ENCODE measurements at regions of chr3 and their contacts with region 1.

Region 1: GRCh38 chr3:17645072-17645698 is 97.2 kb downstream of the TBC1D5 start:
- DNase-seq: peak in 1 of 2 experiments; percentile 67
- H3K4me3 ChIP-seq: no peak overlapping the region
- H3K4me3 Mint-ChIP-seq: no peak overlapping the region
- H3K27ac Mint-ChIP-seq: no peak overlapping the region
- H3K4me1 ChIP-seq: peaks cover 4% of the 10 kb centered on the region
- H3K4me1 Mint-ChIP-seq: no peaks in the 10 kb centered on the region
- H3K27me3 ChIP-seq: no peaks in the 10 kb centered on the region
- H3K27me3 Mint-ChIP-seq: no peaks in the 10 kb centered on the region
- CTCF ChIP-seq: peak; percentile 64 to 83

Region 2: DNA sequence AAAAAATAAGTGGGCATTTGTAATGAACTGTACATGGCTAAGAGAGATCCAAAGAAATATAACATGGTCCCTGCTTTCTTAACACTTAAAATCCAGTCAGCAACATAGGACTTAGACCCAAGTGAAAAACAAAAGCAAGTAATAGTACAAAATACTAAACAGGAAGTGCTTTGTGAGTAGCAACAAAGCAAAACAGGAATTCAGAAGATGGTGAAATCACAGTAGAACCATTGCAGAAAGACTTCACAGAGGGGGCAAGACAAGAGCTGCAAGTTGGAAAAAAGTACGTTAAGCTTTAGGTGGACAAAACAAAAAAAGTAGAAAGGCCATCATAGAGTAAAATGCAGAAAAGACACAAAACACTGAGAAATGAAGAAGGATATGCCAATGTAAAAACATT is 18.8 kb before region 1 on chr3:
- CTCF ChIA-PET with region 1: no interaction called
- POLR2A ChIA-PET with region 1: no interaction called
- intact Hi-C with region 1: no loop called
- DNase-seq: no peak
- H3K4me3 ChIP-seq: no peak overlapping the region
- H3K4me3 Mint-ChIP-seq: no peak overlapping the region
- H3K27ac Mint-ChIP-seq: no peak overlapping the region
- H3K4me1 ChIP-seq: no peaks in the 10 kb centered on the region
- H3K4me1 Mint-ChIP-seq: peaks cover 12% of the 10 kb centered on the region
- H3K27me3 ChIP-seq: no peaks in the 10 kb centered on the region
- H3K27me3 Mint-ChIP-seq: no peaks in the 10 kb centered on the region
- CTCF ChIP-seq: no peak

Region 3: DNA sequence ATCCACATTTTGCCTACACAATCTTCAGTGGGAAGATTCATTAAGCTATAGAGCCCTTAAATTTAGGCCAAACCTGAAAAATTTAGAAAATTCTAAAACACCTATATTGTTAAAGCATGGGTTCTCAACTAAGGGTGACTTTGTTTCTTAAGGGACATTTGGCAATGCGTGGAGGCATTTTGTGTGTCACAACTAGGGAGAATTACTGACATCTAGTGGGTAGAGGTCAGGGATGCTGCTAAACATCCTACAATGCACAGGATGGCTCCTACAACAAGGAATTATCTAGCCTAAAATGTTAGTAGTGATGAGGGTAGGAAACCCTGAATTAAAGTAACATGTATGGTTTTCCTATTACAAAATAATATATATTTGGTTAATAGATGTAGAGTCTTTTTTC is 41.4 kb after region 1 on chr3:
- CTCF ChIA-PET with region 1: no interaction called
- POLR2A ChIA-PET with region 1: no interaction called
- intact Hi-C with region 1: loop called (anchors 1 kb)
- DNase-seq: peak in 1 of 2 experiments; percentile 28
- H3K4me3 ChIP-seq: no peak overlapping the region
- H3K4me3 Mint-ChIP-seq: no peak overlapping the region
- H3K27ac Mint-ChIP-seq: no peak overlapping the region
- H3K4me1 ChIP-seq: no peaks in the 10 kb centered on the region
- H3K4me1 Mint-ChIP-seq: no peaks in the 10 kb centered on the region
- H3K27me3 ChIP-seq: no peaks in the 10 kb centered on the region
- H3K27me3 Mint-ChIP-seq: no peaks in the 10 kb centered on the region
- CTCF ChIP-seq: peak; percentile 31 to 50

Region 4: GRCh38 chr3:17742108-17742879 is 97.1 kb after region 1 on chr3 and contains the start of gene TBC1D5:
- CTCF ChIA-PET with region 1: interaction called, 12 read pairs
- POLR2A ChIA-PET with region 1: interaction called, 7 read pairs
- intact Hi-C with region 1: loop called (anchors 5 kb)
- DNase-seq: peak; percentile 97
- H3K4me3 ChIP-seq: peak within 1 kb of the TSS; percentile 77
- H3K4me3 Mint-ChIP-seq: peak within 1 kb of the TSS; percentile 82
- H3K27ac Mint-ChIP-seq: peak within 1 kb of the TSS; percentile 80
- H3K4me1 ChIP-seq: peaks cover 11% of the 10 kb centered on the region; the same call in 1 of the 2 replicates
- H3K4me1 Mint-ChIP-seq: peaks cover 17% of the 10 kb centered on the region
- H3K27me3 ChIP-seq: no peaks in the 10 kb centered on the region
- H3K27me3 Mint-ChIP-seq: no peaks in the 10 kb centered on the region
- CTCF ChIP-seq: no peak
- total RNA-seq, gene TBC1D5: 36.4 and 36.5 TPM in 2 replicates

Region 5: DNA sequence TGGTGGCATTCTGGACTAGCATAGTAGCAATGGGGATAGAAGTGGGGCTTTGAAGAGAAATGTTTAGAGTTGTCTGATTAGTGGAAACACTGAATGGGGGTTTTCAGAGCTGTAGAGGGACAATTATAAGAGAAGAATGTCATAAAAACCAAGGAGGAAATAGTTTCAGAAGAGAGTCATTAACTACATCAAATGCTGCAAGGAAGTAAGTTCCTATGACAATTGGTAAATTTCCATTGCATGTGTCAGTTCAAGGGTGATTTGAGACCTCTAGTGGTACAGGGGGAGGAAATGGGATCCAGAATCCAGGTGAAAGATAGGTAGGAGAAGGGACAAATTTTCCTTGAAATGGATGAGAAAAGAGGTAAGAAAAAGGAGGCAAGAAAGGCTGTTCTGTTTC is 165.6 kb after region 1 on chr3:
- CTCF ChIA-PET with region 1: interaction called, 3 read pairs
- POLR2A ChIA-PET with region 1: no interaction called
- intact Hi-C with region 1: loop called (anchors 1 kb)
- DNase-seq: no peak
- H3K4me3 ChIP-seq: no peak overlapping the region
- H3K4me3 Mint-ChIP-seq: no peak overlapping the region
- H3K27ac Mint-ChIP-seq: no peak overlapping the region
- H3K4me1 ChIP-seq: no peaks in the 10 kb centered on the region
- H3K4me1 Mint-ChIP-seq: no peaks in the 10 kb centered on the region
- H3K27me3 ChIP-seq: no peaks in the 10 kb centered on the region
- H3K27me3 Mint-ChIP-seq: no peaks in the 10 kb centered on the region
- CTCF ChIP-seq: peak in 1 of 2 experiments; percentile 39

Region 6: GRCh38 chr3:17972959-17973906 is 328.0 kb after region 1 on chr3:
- CTCF ChIA-PET with region 1: no interaction called
- POLR2A ChIA-PET with region 1: no interaction called
- intact Hi-C with region 1: no loop called
- DNase-seq: peak; percentile 75 to 80
- H3K4me3 ChIP-seq: peak overlapping the region; percentile 2; the same call in 1 of the 2 replicates
- H3K4me3 Mint-ChIP-seq: peak overlapping the region; percentile 52
- H3K27ac Mint-ChIP-seq: peak overlapping the region; percentile 56
- H3K4me1 ChIP-seq: peaks cover 32% of the 10 kb centered on the region
- H3K4me1 Mint-ChIP-seq: peaks cover 26% of the 10 kb centered on the region
- H3K27me3 ChIP-seq: no peaks in the 10 kb centered on the region
- H3K27me3 Mint-ChIP-seq: no peaks in the 10 kb centered on the region
- CTCF ChIP-seq: no peak